ENCODE measurements at regions of chr1 and their contacts with region 1.

Region 1: GRCh38 chr1:40531381-40532061 is at the start of gene ZNF684:
- DNase-seq: peak; percentile 91
- ATAC-seq: peak; percentile 97
- H3K4me3 Mint-ChIP-seq: peak within 1 kb of the TSS; percentile 97
- H3K27ac Mint-ChIP-seq: peak within 1 kb of the TSS; percentile 95
- H3K4me1 Mint-ChIP-seq: peaks cover 20% of the 10 kb centered on the region
- H3K27me3 Mint-ChIP-seq: peaks cover 13% of the 10 kb centered on the region
- total RNA-seq, gene ZNF684: 6.1 to 7.9 TPM

Region 2: DNA sequence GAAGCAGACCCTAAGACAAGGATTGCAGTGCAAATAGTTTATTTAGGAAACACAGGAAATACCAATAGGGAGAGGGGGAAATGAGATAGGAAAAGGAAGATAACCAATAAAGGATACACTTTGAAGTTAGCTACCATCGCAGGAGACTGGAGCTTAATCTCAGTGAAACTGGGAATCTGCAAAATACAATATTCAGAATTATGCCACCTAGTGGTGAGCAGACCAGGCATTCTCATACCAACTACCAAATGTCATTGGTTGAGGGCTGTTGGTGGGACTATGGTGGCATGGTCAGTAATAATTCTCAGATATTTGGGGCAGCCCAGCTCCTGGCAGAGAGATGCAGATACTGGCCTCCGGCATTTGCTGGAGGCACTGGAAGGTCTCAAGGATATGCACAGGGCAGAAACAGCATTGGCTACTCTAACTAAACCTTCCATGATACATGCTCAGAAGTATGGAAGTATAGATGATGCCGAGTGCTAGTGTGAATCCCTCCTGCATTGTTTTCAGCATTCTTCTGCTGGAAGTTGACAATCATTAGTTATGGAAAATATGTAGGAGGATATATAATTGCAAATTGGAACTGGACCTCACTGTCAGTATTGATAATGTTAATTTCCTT is 93.0 kb before region 1 on chr1:
- CTCF ChIA-PET with region 1: interaction called, 11 read pairs
- POLR2A ChIA-PET with region 1: no interaction called
- DNase-seq: peak; percentile 27
- ATAC-seq: peak; percentile 47
- H3K4me3 Mint-ChIP-seq: no peak overlapping the region
- H3K27ac Mint-ChIP-seq: no peak overlapping the region
- H3K4me1 Mint-ChIP-seq: no peaks in the 10 kb centered on the region
- H3K27me3 Mint-ChIP-seq: no peaks in the 10 kb centered on the region

Region 3: GRCh38 chr1:40469327-40469726 is 62.2 kb before region 1 on chr1:
- CTCF ChIA-PET with region 1: no interaction called
- POLR2A ChIA-PET with region 1: no interaction called
- DNase-seq: no peak
- ATAC-seq: no peak
- H3K4me3 Mint-ChIP-seq: no peak overlapping the region
- H3K27ac Mint-ChIP-seq: no peak overlapping the region
- H3K4me1 Mint-ChIP-seq: no peaks in the 10 kb centered on the region
- H3K27me3 Mint-ChIP-seq: no peaks in the 10 kb centered on the region

Region 4: DNA sequence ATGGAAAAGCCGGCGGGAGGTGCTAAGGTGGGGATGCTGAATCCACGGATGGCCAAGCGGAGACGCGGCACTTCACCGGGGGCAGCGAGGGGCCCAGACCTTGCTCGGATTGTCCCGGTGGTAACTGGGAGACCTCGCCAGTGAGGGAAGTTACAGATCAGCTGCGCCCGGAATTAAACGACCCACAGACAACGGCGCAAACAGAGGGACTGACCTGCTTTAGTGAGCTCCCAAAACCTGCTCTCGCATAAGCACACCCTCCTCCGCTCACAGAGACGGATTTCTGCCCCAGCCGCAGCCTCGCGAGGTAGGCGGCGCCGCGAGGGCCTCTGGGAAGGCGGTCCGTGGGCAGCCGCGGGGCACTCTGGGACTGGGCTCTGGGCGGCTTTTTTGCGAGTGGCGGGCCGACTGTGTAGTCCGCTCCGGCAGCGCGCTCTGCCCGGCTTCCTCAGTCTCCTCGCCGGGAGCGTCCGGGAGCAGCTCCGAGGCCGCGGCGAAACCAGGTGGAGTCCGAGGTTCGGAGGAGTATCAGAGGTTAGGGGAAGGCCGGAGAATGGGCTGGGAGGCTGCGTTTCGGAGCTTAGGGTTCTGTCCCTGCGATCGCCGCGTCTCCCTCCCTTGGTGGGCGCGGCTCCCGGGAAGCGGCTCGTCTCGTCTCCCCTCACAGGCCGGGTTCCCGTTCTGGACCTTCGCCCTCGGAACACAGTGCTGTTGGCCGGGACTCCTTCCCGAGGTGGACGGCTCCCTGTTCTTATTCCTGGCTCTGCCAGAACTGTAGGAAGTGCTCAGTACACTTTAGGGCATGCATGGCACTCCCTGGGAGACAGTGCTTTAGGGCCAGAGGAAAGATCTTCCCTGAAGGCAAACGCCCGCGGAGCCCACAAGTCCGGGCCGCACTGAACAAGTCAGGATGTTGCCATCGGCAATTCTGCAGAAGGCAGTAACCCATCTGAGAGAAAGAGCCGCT is 22.9 kb before region 1 on chr1 and contains the start of gene EXO5:
- CTCF ChIA-PET with region 1: interaction called, 8 read pairs
- POLR2A ChIA-PET with region 1: interaction called, 11 read pairs
- DNase-seq: peak; percentile 90
- ATAC-seq: peak; percentile 99
- H3K4me3 Mint-ChIP-seq: peak within 1 kb of the TSS; percentile 82
- H3K27ac Mint-ChIP-seq: peak within 1 kb of the TSS; percentile 90
- H3K4me1 Mint-ChIP-seq: peaks cover 15% of the 10 kb centered on the region
- H3K27me3 Mint-ChIP-seq: no peaks in the 10 kb centered on the region
- total RNA-seq, gene EXO5: 21.0 to 24.2 TPM

Region 5: DNA sequence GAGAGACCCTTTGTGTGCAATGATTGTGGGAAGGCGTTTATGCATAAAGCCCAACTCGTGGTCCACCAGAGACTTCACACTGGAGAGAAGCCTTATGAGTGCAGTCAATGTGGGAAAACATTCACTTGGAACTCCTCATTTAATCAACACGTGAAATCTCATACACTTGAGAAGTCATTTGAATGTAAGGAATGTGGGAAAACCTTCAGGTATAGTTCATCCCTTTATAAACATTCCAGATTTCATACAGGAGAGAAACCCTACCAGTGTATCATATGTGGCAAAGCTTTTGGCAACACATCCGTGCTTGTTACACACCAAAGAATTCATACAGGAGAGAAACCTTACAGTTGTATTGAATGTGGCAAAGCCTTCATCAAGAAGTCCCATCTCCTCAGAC is 15.4 kb after region 1 on chr1:
- CTCF ChIA-PET with region 1: interaction called, 15 read pairs
- POLR2A ChIA-PET with region 1: no interaction called
- DNase-seq: no peak
- ATAC-seq: no peak
- H3K4me3 Mint-ChIP-seq: no peak overlapping the region
- H3K27ac Mint-ChIP-seq: no peak overlapping the region
- H3K4me1 Mint-ChIP-seq: no peaks in the 10 kb centered on the region
- H3K27me3 Mint-ChIP-seq: no peaks in the 10 kb centered on the region

Region 6: GRCh38 chr1:40668769-40669525 is 137.4 kb after region 1 on chr1:
- CTCF ChIA-PET with region 1: interaction called, 10 read pairs
- POLR2A ChIA-PET with region 1: no interaction called
- DNase-seq: peak; percentile 90
- ATAC-seq: peak; percentile 59
- H3K4me3 Mint-ChIP-seq: peak overlapping the region; percentile 36
- H3K27ac Mint-ChIP-seq: no peak overlapping the region
- H3K4me1 Mint-ChIP-seq: peaks cover 16% of the 10 kb centered on the region
- H3K27me3 Mint-ChIP-seq: peaks cover 12% of the 10 kb centered on the region

Region 7: DNA sequence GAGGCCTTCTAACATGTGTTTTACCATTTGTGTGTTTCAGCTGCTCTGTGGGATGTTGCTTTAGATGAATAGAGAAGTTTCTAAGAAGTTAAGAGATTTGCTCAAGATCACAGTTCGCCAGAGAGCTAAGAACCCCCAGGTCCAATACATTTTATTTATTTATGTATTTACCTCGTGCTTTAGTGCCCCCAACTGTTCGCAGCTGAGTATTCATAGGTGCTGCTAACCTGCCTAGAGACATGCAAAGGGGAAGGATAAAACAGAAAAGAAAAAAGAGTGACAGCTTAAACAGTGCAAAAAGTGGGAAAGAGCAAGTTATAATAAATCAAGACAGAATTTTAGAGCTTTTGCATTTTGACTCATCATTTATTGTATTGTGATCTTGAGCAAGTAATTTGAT is 191.1 kb after region 1 on chr1:
- CTCF ChIA-PET with region 1: no interaction called
- POLR2A ChIA-PET with region 1: no interaction called
- DNase-seq: no peak
- ATAC-seq: no peak
- H3K4me3 Mint-ChIP-seq: no peak overlapping the region
- H3K27ac Mint-ChIP-seq: no peak overlapping the region
- H3K4me1 Mint-ChIP-seq: peaks cover 14% of the 10 kb centered on the region
- H3K27me3 Mint-ChIP-seq: no peaks in the 10 kb centered on the region